ENCODE measurements at regions of chr15 and their contacts with region 1.

Region 1: GRCh38 chr15:60798821-60799220 is 319.9 kb upstream of the ICE2 start:
- DNase-seq: no peak
- H3K4me3 Mint-ChIP-seq: no peak overlapping the region
- H3K27ac Mint-ChIP-seq: no peak overlapping the region
- H3K4me1 Mint-ChIP-seq: peaks cover 45% of the 10 kb centered on the region
- H3K27me3 Mint-ChIP-seq: no peaks in the 10 kb centered on the region

Region 2: GRCh38 chr15:60635507-60636352 is 163.1 kb before region 1 on chr15:
- CTCF ChIA-PET with region 1: no interaction called
- DNase-seq: no peak
- H3K4me3 Mint-ChIP-seq: no peak overlapping the region
- H3K27ac Mint-ChIP-seq: no peak overlapping the region
- H3K4me1 Mint-ChIP-seq: peaks cover 4% of the 10 kb centered on the region
- H3K27me3 Mint-ChIP-seq: peaks cover 18% of the 10 kb centered on the region

Region 3: DNA sequence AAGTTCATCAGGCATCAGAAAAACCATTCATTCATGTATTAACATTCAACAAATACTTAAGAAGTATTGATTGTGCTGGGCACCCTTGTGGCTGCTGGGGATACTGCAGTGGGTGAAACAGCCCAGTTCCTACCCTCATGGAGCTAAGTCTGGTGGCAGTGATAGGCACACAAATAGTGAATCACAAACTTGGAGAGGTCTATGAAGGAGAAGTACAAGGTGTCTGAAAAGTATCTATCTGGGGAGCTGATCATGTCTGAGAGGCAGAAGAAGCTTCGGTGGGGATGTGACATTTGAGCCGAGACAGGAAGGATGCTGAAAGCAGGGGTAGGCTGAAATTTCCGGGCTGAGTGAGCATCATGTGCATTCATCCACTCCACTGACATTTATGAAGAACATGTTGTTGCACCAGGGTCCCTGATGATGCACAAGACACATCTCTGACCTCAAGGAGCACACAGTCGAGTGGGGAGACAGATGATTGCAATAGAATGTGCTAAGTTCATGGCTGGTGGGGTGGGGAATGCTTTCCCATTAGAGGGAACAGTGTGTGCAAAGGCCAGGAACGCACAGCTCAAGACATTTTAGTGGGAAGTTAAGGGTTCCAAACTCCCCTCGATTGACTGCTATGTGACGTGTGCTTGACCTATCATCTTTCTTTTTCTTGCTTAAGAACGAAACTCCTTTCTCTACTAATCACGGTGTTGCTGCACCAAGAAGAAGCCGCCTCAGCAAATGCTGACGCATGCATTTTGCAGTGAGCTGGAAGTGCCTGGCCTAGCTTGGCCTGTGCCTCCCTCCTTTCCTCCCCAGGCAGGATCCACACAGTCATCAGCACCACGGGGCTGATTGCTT is 10.8 kb before region 1 on chr15:
- CTCF ChIA-PET with region 1: interaction called, 16 read pairs
- DNase-seq: peak; percentile 40
- H3K4me3 Mint-ChIP-seq: no peak overlapping the region
- H3K27ac Mint-ChIP-seq: no peak overlapping the region
- H3K4me1 Mint-ChIP-seq: peaks cover 10% of the 10 kb centered on the region
- H3K27me3 Mint-ChIP-seq: no peaks in the 10 kb centered on the region